ENCODE measurements at regions of chr4 and their contacts with region 1.

Region 1: GRCh38 chr4:42656944-42657792 is at the start of gene ATP8A1:
- DNase-seq: peak; percentile 85 to 98 (median 92)
- ATAC-seq: peak; percentile 91
- H3K4me3 ChIP-seq: peak within 1 kb of the TSS; percentile 96
- H3K4me3 Mint-ChIP-seq: peak within 1 kb of the TSS; percentile 98
- H3K27ac ChIP-seq: peak within 1 kb of the TSS; percentile 71 to 91
- H3K27ac Mint-ChIP-seq: peak within 1 kb of the TSS; percentile 95
- H3K4me1 ChIP-seq: peaks cover 25% of the 10 kb centered on the region
- H3K4me1 Mint-ChIP-seq: peaks cover 51% of the 10 kb centered on the region
- H3K27me3 ChIP-seq: no peaks in the 10 kb centered on the region
- H3K27me3 Mint-ChIP-seq: no peaks in the 10 kb centered on the region
- CTCF ChIP-seq: no peak
- total RNA-seq, gene ATP8A1: 44.9 to 45.5 TPM

Region 2: DNA sequence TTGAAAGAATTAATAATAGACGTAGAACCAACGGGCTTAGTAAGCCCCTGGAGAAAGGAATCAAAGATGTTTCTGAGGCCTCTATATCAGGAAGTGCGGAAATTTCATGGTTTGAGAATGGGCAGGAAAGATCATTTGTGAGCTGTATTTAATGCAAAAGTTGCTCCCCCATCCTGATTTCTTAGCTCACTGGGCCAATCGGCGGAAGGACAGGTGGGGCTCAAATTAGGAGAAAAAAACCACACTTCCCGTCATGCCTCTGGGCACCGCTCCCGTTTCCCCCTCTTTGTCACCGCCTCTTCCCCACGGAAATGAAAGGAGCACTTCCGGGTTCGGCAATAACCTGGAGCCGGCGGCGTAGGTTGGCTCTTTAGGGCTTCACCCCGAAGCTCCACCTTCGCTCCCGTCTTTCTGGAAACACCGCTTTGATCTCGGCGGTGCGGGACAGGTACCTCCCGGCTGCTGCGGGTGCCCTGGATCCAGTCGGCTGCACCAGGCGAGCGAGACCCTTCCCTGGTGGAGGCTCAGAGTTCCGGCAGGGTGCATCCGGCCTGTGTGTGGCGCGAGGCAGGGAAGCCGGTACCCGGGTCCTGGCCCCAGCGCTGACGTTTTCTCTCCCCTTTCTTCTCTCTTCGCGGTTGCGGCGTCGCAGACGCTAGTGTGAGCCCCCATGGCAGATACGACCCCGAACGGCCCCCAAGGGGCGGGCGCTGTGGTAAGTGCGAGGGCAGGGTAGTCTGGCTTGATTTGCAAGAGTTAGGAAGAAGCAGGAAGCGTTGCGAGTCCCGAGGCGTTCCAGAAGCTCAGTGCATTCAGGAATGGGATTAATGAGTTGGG is 722.1 kb before region 1 on chr4 and contains the start of gene TMEM33:
- CTCF ChIA-PET with region 1: no interaction called
- POLR2A ChIA-PET with region 1: no interaction called
- intact Hi-C with region 1: loop called in 1 of 2 experiments (anchors 10 kb)
- DNase-seq: peak; percentile 59 to 92 (median 70)
- ATAC-seq: peak; percentile 85
- H3K4me3 ChIP-seq: peak within 1 kb of the TSS; percentile 85
- H3K4me3 Mint-ChIP-seq: peak within 1 kb of the TSS; percentile 94
- H3K27ac ChIP-seq: peak within 1 kb of the TSS; percentile 51 to 76
- H3K27ac Mint-ChIP-seq: peak within 1 kb of the TSS; percentile 86
- H3K4me1 ChIP-seq: peaks cover 25% of the 10 kb centered on the region
- H3K4me1 Mint-ChIP-seq: peaks cover 55% of the 10 kb centered on the region
- H3K27me3 ChIP-seq: no peaks in the 10 kb centered on the region
- H3K27me3 Mint-ChIP-seq: no peaks in the 10 kb centered on the region
- CTCF ChIP-seq: peak; percentile 16
- total RNA-seq, gene TMEM33: 18.0 to 19.7 TPM

Region 3: DNA sequence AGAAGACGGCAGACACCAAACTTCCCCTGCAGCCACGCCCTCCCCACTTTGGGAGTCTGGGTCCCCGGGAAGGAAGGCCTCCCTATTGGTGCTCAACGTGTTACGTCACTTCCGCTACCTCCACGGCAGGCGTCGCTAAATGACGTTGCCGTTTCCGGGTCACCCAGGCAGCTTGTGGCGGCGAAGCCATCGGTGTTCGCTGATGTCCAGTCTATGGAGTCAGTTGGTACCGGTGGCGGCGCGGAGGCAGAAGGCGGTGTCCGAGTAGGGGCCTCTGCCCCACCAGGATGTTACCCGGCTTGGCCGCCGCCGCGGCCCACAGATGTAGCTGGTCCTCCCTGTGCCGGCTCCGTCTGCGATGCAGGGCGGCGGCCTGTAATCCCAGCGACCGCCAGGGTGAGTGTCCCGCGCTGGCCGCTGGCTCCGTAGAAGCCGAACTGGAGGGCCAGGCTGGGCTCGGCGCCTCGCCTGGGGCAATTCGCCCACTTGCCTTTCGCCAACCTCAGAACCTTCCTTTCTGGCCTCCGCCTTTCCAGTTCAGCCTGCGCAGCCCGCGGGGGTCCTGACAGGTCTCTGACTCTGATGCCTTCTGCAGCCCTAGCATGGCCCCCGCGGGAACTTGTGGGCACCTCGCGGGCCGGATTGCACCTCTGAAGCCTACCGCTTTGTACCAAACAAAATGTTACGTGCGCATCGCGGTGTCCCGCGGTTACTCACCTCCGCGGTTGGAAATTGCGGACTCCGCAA is 666.6 kb before region 1 on chr4 and contains the start of gene SLC30A9:
- CTCF ChIA-PET with region 1: no interaction called
- POLR2A ChIA-PET with region 1: no interaction called
- intact Hi-C with region 1: loop called in 1 of 2 experiments (anchors 10 kb)
- DNase-seq: peak; percentile 84 to 98 (median 88)
- ATAC-seq: peak; percentile 94
- H3K4me3 ChIP-seq: peak within 1 kb of the TSS; percentile 89
- H3K4me3 Mint-ChIP-seq: peak within 1 kb of the TSS; percentile 98
- H3K27ac ChIP-seq: peak within 1 kb of the TSS; percentile 77
- H3K27ac Mint-ChIP-seq: peak within 1 kb of the TSS; percentile 98
- H3K4me1 ChIP-seq: peaks cover 22% of the 10 kb centered on the region
- H3K4me1 Mint-ChIP-seq: peaks cover 42% of the 10 kb centered on the region
- H3K27me3 ChIP-seq: no peaks in the 10 kb centered on the region
- H3K27me3 Mint-ChIP-seq: no peaks in the 10 kb centered on the region
- CTCF ChIP-seq: peak; percentile 26
- total RNA-seq, gene SLC30A9: 18.2 to 20.4 TPM

Region 4: DNA sequence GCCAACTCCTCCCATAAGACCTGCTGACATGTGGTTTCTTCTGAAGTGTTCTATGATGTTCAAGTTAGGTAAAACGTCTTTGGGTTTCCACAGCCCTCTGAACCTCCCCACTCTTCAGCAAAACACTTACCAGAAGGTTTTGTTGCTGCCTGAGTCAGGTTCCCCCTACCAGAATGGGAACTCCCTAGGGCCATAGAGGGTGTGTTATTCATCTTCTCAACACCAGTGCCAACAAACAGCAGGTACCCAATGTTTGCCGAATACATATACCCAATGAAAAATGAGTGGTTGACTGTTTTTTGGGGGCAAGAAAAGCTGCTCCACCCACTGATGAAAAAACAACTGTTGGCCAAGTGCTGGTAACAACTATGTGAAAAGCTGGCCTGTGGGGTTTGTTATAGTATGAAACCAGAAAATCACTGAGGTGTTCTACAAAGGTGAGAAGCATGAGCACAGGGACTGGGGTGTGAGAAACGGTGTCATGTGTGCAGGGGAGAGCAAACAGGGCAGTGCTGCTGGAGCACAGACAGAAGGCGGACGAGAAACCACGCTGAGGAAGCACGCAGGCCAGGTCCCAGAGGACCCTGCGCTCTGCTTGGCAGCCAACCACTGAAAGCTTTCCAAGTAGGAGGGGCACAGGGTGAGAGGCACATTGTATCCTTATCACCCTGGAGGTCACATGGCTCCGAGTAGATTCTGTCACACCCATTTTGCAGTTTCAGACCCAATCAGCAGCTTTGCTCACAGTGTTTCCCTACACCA is 29.1 kb before region 1 on chr4:
- CTCF ChIA-PET with region 1: interaction called, 9 read pairs
- POLR2A ChIA-PET with region 1: interaction called, 42 read pairs
- intact Hi-C with region 1: loop called (anchors 1 to 5 kb)
- DNase-seq: peak in 13 of 14 experiments; percentile 5 to 82 (median 39)
- ATAC-seq: peak; percentile 90
- H3K4me3 ChIP-seq: no peak overlapping the region
- H3K4me3 Mint-ChIP-seq: peak overlapping the region; percentile 70
- H3K27ac ChIP-seq: peak overlapping the region; percentile 15 to 42
- H3K27ac Mint-ChIP-seq: peak overlapping the region; percentile 92
- H3K4me1 ChIP-seq: peaks cover 25% of the 10 kb centered on the region
- H3K4me1 Mint-ChIP-seq: peaks cover 73% of the 10 kb centered on the region
- H3K27me3 ChIP-seq: no peaks in the 10 kb centered on the region
- H3K27me3 Mint-ChIP-seq: no peaks in the 10 kb centered on the region
- CTCF ChIP-seq: no peak

Region 5: DNA sequence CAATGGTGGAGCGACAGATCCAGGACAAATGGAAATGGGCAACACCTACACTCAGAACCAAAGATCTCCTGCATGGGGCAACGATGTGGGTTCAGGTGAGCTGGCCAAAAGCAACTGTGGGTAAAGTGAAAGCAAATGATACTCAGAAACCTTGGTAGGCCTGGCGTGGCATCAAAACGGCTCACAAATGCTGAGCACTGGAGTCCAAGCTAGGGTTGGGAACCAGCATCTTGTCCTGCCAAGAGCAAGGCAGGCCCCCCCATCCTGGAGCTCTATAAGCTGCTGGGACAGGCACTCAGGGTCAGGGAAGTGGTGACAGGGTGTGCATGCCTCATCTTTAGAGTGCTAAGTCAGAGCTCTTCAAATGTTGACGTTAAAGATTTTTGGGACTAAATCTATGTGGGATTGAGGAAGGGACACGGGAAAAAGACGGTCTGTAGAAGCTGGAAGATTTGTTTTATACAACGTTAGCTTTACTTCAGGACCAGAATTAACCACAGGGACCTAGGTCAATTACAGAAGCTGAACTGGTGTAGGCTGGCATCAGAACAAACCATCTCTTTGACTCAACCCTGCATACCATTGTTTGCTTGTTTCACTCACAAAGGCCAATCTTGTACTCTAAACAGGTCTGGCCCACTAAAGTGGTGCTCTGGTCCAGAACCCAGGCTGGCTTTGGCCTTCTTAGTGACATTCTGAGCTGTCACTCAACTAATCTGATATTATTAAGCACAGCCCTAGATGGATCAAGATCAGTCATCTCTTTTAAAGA is 11.0 kb before region 1 on chr4:
- CTCF ChIA-PET with region 1: interaction called, 4 read pairs
- POLR2A ChIA-PET with region 1: interaction called, 35 read pairs
- intact Hi-C with region 1: no loop called
- DNase-seq: peak in 1 of 14 experiments; percentile 25
- ATAC-seq: no peak
- H3K4me3 ChIP-seq: no peak overlapping the region
- H3K4me3 Mint-ChIP-seq: no peak overlapping the region
- H3K27ac ChIP-seq: no peak overlapping the region
- H3K27ac Mint-ChIP-seq: no peak overlapping the region
- H3K4me1 ChIP-seq: peaks cover 12% of the 10 kb centered on the region
- H3K4me1 Mint-ChIP-seq: peaks cover 84% of the 10 kb centered on the region
- H3K27me3 ChIP-seq: no peaks in the 10 kb centered on the region
- H3K27me3 Mint-ChIP-seq: no peaks in the 10 kb centered on the region
- CTCF ChIP-seq: no peak

Region 6: DNA sequence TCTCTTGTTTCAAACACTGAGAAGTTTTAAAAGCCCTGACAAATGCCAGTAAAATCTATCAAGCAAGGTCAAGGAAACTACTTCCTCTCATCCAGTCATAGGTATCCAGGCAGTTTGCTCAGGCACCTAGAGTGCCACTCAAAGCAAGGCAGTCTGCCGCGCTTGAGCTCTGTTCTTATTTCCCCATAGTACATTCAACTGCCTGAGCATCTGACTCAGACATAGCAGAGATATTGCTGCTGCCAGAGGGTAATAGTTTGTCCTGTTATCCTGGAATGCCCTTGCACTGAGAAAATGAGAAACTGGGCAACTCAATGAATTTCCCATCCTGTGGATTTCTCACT is 15.9 kb after region 1 on chr4:
- CTCF ChIA-PET with region 1: no interaction called
- POLR2A ChIA-PET with region 1: interaction called, 47 read pairs
- intact Hi-C with region 1: loop called in 1 of 2 experiments (anchors 2 kb)
- DNase-seq: peak in 3 of 14 experiments; percentile 18 to 28 (median 20)
- ATAC-seq: no peak
- H3K4me3 ChIP-seq: no peak overlapping the region
- H3K4me3 Mint-ChIP-seq: peak overlapping the region; percentile 12
- H3K27ac ChIP-seq: peak overlapping the region in 1 of 2 donors; percentile 75
- H3K27ac Mint-ChIP-seq: peak overlapping the region; percentile 37
- H3K4me1 ChIP-seq: peaks cover 13% of the 10 kb centered on the region
- H3K4me1 Mint-ChIP-seq: peaks cover 36% of the 10 kb centered on the region
- H3K27me3 ChIP-seq: no peaks in the 10 kb centered on the region
- H3K27me3 Mint-ChIP-seq: no peaks in the 10 kb centered on the region
- CTCF ChIP-seq: no peak

Region 7: GRCh38 chr4:42678512-42678911 is 21.3 kb after region 1 on chr4:
- CTCF ChIA-PET with region 1: interaction called, 3 read pairs
- POLR2A ChIA-PET with region 1: interaction called, 41 read pairs
- intact Hi-C with region 1: no loop called
- DNase-seq: no peak
- ATAC-seq: no peak
- H3K4me3 ChIP-seq: no peak overlapping the region
- H3K4me3 Mint-ChIP-seq: no peak overlapping the region
- H3K27ac ChIP-seq: no peak overlapping the region
- H3K27ac Mint-ChIP-seq: no peak overlapping the region
- H3K4me1 ChIP-seq: no peaks in the 10 kb centered on the region
- H3K4me1 Mint-ChIP-seq: peaks cover 23% of the 10 kb centered on the region
- H3K27me3 ChIP-seq: no peaks in the 10 kb centered on the region
- H3K27me3 Mint-ChIP-seq: no peaks in the 10 kb centered on the region
- CTCF ChIP-seq: no peak